ENCODE measurements at regions of chr4 and their contacts with region 1.

Region 1: GRCh38 chr4:110165382-110166285 is 32.8 kb downstream of the ELOVL6 start:
- DNase-seq: peak; percentile 85
- ATAC-seq: peak; percentile 100
- H3K4me3 Mint-ChIP-seq: peak overlapping the region; percentile 59
- H3K27ac Mint-ChIP-seq: peak overlapping the region; percentile 97
- H3K4me1 Mint-ChIP-seq: peaks cover 30% of the 10 kb centered on the region
- H3K27me3 Mint-ChIP-seq: no peaks in the 10 kb centered on the region

Region 2: GRCh38 chr4:110049951-110050925 is 115.4 kb before region 1 on chr4:
- CTCF ChIA-PET with region 1: interaction called, 22 read pairs
- POLR2A ChIA-PET with region 1: no interaction called
- DNase-seq: peak; percentile 72
- ATAC-seq: no peak
- H3K4me3 Mint-ChIP-seq: no peak overlapping the region
- H3K27ac Mint-ChIP-seq: no peak overlapping the region
- H3K4me1 Mint-ChIP-seq: peaks cover 2% of the 10 kb centered on the region
- H3K27me3 Mint-ChIP-seq: no peaks in the 10 kb centered on the region

Region 3: DNA sequence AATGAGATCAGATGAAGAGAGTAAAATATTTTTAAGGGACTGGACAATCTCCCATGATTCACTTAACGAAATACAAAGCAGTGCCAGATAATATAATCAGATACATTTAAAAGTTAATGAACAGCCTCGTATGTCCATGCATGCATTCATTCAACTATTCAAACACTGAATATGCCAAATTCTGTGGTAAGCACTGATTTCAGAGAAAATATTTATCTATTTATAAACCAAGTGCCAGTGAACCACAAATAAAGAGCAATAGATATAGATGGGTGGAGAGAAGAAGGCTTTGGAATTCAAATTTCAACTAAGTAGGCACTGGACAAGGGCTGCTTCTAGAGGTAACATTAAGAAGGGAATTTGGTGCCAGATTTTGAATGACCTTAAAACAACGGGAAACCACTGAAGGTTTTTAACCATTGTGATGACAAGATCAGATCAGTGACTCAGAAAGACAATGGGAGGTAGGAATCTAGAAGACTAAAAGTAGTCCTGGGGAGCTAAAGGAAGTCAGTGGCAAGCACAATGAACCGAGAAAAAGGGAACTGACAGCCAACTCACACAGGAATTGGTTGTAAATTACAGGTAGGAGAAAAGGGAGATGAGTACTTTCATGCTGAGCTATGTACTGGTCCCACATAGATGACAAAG is 18.6 kb after region 1 on chr4:
- CTCF ChIA-PET with region 1: interaction called, 12 read pairs
- POLR2A ChIA-PET with region 1: interaction called, 3 read pairs
- DNase-seq: no peak
- ATAC-seq: no peak
- H3K4me3 Mint-ChIP-seq: no peak overlapping the region
- H3K27ac Mint-ChIP-seq: peak overlapping the region; percentile 40
- H3K4me1 Mint-ChIP-seq: peaks cover 8% of the 10 kb centered on the region
- H3K27me3 Mint-ChIP-seq: no peaks in the 10 kb centered on the region

Region 4: GRCh38 chr4:110196206-110196870 is 30.7 kb after region 1 on chr4:
- CTCF ChIA-PET with region 1: interaction called, 4 read pairs
- POLR2A ChIA-PET with region 1: interaction called, 31 read pairs
- DNase-seq: peak; percentile 56
- ATAC-seq: peak; percentile 32
- H3K4me3 Mint-ChIP-seq: peak overlapping the region; percentile 93
- H3K27ac Mint-ChIP-seq: peak overlapping the region; percentile 95
- H3K4me1 Mint-ChIP-seq: peaks cover 39% of the 10 kb centered on the region
- H3K27me3 Mint-ChIP-seq: no peaks in the 10 kb centered on the region